ENCODE measurements at regions of chr3 and their contacts with region 1.

Region 1: DNA sequence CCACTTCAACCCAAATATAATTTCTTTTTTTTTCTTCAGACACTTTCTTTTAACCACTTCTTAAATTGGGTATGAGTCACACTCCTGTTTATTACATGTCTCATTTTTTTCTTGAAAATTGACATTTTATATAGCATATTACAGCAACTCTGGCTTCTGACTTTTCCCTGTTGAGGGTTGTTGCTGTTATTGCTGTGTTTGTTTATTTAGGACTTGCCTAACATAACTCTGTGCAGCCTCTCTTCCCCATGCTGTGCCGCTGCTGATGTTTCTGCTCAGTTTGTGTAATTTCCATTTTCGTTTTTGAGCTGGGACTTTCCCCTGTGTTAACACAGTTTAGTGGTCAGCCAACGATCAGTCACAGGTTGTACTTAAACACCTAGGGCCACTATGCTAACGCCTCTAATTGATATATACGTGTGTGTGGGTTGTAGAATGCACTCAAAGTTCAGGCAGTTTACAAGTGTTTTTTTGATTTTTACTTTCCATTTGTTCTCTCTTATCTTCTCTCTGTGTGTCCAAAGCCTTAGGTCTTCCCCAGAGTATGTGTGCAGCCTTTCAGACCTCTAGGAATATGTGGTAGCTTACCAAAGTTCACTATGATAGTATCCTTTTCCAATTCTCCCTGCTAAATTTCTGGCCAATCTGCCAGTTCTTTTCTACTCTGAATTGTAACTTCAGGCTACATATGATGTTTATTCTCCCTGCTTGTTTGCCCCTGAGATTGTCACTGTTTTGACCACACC is 337.2 kb downstream of the ZBTB20 start:
- DNase-seq: peak; percentile 55
- CTCF ChIP-seq: no peak

Region 2: GRCh38 chr3:114152519-114153151 is 657.2 kb before region 1 on chr3:
- in situ Hi-C with region 1: loop called (anchors 25 kb)
- DNase-seq: peak; percentile 84
- CTCF ChIP-seq: peak; percentile 78

Region 3: GRCh38 chr3:114370537-114371174 is 439.2 kb before region 1 on chr3:
- in situ Hi-C with region 1: no loop called
- DNase-seq: no peak
- CTCF ChIP-seq: no peak

Measured in GM13976 (cell line).